OCI-LY7 (cell line): ENCODE measurements at regions of chr6 and their contacts with region 1.

Region 1: DNA sequence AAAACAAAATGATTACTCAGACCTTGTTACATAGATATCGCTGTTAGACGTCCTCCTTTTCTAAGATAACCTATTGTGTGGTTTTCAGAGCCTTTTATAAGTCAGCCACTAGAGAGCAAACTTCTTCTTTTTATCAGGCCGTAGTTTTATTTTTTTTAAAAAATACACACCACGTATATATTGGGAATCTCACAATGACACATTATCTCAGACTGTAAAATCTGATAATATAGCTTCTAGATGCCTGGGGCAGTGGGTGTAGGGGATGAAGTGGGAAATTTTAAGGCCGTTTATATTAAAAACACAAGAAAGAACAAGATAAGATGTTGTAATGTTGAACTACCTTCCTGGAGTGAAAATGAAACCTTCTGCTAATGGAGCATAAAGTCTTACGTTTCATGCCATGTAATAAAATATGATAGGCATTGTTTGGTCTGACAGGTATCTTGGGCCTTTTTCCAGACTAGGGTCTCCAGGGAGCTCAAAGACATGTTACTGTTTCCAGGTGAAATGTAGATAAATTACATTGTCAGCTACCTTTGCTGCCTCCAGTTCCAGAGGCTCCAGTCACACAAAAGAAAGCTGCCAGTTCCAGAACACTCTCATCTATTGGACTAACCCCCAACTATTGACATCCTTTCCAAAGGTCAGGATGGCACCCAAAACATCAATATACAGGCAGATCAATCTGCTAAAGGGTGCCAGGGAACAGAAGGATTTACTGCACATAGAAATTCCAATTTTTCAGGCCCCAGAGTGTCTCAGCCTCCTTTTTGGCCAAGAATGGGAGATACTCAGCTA is 130.2 kb upstream of the AKIRIN2 start:
- DNase-seq: peak; percentile 84
- H3K4me3 ChIP-seq: peak overlapping the region; percentile 42
- H3K27ac ChIP-seq: peak overlapping the region; percentile 81
- H3K4me1 ChIP-seq: peaks cover 68% of the 10 kb centered on the region
- CTCF ChIP-seq: peak; percentile 98

Region 2: GRCh38 chr6:87656857-87657256 is 175.4 kb before region 1 on chr6:
- CTCF ChIA-PET with region 1: no interaction called
- POLR2A ChIA-PET with region 1: no interaction called
- intact Hi-C with region 1: no loop called
- DNase-seq: peak; percentile 51
- H3K4me3 ChIP-seq: no peak overlapping the region
- H3K27ac ChIP-seq: no peak overlapping the region
- H3K4me1 ChIP-seq: peaks cover 7% of the 10 kb centered on the region
- CTCF ChIP-seq: no peak

Region 3: GRCh38 chr6:87671555-87672029 is 160.6 kb before region 1 on chr6:
- CTCF ChIA-PET with region 1: no interaction called
- POLR2A ChIA-PET with region 1: no interaction called
- intact Hi-C with region 1: no loop called
- DNase-seq: no peak
- H3K4me3 ChIP-seq: no peak overlapping the region
- H3K27ac ChIP-seq: no peak overlapping the region
- H3K4me1 ChIP-seq: peaks cover 10% of the 10 kb centered on the region
- CTCF ChIP-seq: no peak

Region 4: GRCh38 chr6:87756858-87757257 is 75.4 kb before region 1 on chr6:
- CTCF ChIA-PET with region 1: no interaction called
- POLR2A ChIA-PET with region 1: interaction called, 8 read pairs
- intact Hi-C with region 1: loop called (anchors 2 kb)
- DNase-seq: peak; percentile 94
- H3K4me3 ChIP-seq: peak overlapping the region; percentile 23
- H3K27ac ChIP-seq: peak overlapping the region; percentile 78
- H3K4me1 ChIP-seq: peaks cover 49% of the 10 kb centered on the region
- CTCF ChIP-seq: no peak

Region 5: DNA sequence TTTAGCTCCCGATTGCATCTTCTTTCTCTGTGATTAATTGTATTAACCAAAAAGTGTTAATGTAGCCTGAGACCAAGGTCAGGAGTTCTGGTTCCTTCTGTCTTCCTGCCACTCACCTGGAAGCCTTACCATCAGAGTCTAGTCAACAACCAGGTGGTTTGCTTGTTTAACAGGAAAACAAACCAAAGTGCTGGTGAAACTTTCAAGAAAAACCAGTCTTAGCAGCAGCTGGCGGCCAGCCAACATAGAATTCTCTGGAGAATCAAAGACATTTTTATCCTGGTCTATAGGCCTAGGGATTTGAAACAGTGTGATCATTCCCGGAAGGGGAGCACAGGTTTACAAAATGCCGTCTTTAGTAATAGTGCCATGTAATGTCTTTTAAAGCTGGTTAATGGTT is 16.3 kb after region 1 on chr6:
- CTCF ChIA-PET with region 1: no interaction called
- POLR2A ChIA-PET with region 1: interaction called, 12 read pairs
- intact Hi-C with region 1: no loop called
- DNase-seq: no peak
- H3K4me3 ChIP-seq: no peak overlapping the region
- H3K27ac ChIP-seq: no peak overlapping the region
- H3K4me1 ChIP-seq: peaks cover 10% of the 10 kb centered on the region
- CTCF ChIP-seq: no peak

Region 6: DNA sequence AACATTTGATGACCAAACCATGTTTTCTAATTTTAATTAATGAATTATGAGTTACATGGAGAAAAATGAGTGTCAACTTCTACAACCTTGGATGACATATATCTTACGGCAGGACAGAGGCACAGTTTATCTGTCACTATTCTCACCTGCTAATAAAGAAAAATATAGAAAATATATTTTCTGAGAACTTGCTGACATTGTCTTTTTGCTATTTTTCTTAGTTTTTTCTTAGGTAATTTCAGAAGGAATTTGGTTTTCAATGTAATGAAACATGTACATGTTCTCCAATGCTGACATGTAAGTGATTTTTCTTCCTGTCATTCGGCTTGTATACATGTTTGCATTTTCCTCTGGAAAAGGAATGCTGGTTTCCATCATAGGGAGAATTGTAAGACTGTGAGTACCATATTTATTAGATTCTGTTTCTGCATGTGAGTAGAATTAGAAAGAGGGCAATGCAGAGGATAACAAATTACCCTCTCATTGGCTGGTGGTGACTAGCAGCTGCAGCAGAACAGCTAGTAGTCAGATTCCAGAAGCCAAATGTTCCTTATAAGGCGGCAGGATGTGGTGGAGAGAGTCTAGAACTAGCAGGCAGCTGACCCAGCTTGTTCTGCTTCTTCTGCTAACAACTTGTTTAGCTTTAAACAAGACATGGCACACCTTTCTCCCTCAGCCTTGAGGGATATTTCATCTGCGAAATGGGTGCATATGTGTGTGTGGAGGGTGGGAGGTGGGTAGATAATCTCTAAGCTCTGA is 82.6 kb after region 1 on chr6:
- CTCF ChIA-PET with region 1: interaction called, 7 read pairs
- POLR2A ChIA-PET with region 1: interaction called, 122 read pairs
- intact Hi-C with region 1: loop called (anchors 1 kb)
- DNase-seq: peak; percentile 58
- H3K4me3 ChIP-seq: no peak overlapping the region
- H3K27ac ChIP-seq: peak overlapping the region; percentile 99
- H3K4me1 ChIP-seq: peaks cover 95% of the 10 kb centered on the region
- CTCF ChIP-seq: no peak

Region 7: GRCh38 chr6:88141561-88142296 is 309.5 kb after region 1 on chr6:
- CTCF ChIA-PET with region 1: no interaction called
- POLR2A ChIA-PET with region 1: interaction called, 3 read pairs
- intact Hi-C with region 1: loop called (anchors 2 kb)
- DNase-seq: peak; percentile 95
- H3K4me3 ChIP-seq: peak overlapping the region; percentile 49
- H3K27ac ChIP-seq: peak overlapping the region; percentile 89
- H3K4me1 ChIP-seq: peaks cover 58% of the 10 kb centered on the region
- CTCF ChIP-seq: no peak; the same call in 1 of the 2 replicates

Region 8: GRCh38 chr6:88238065-88238464 is 405.8 kb after region 1 on chr6:
- CTCF ChIA-PET with region 1: no interaction called
- POLR2A ChIA-PET with region 1: no interaction called
- intact Hi-C with region 1: loop called (anchors 2 kb)
- DNase-seq: peak; percentile 74
- H3K4me3 ChIP-seq: no peak overlapping the region
- H3K27ac ChIP-seq: no peak overlapping the region
- H3K4me1 ChIP-seq: peaks cover 17% of the 10 kb centered on the region
- CTCF ChIP-seq: peak; percentile 88